ENCODE measurements at regions of chr19 and their contacts with region 1.

Region 1: DNA sequence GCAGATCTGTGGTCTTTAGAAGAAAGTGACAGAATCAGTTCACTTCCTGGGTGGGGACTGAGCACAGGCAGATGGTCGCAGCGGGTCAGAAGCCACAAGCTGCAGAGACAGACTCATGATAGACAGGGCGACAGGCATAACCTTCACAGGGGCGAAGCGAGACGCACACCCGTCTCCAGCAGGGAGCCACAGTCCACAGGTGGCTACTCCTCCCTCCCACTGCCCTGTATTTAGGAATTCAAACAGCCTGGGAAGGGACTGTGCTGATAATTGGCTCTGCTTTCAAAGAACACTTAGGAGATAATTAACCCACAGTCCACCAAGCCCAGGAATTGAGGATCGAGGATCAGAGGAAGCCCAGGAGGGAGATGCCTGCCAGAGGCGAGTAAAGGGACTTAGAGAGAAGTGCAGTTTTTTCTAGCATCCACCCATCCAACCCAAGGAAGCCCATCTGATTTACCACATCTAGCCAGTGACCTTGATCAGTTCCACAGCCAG is 23.2 kb downstream of the RFX2 start:
- DNase-seq: no peak
- H3K4me3 ChIP-seq: no peak overlapping the region
- H3K27ac ChIP-seq: peak overlapping the region; percentile 78
- H3K4me1 ChIP-seq: peaks cover 43% of the 10 kb centered on the region
- H3K27me3 ChIP-seq: no peaks in the 10 kb centered on the region
- CTCF ChIP-seq: no peak
- POLR2A ChIP-seq: no peak

Region 2: GRCh38 chr19:6066661-6067646 is 20.2 kb before region 1 on chr19:
- CTCF ChIA-PET with region 1: interaction called, 10 read pairs
- POLR2A ChIA-PET with region 1: interaction called, 4 read pairs
- dilution Hi-C with region 1: no loop called
- intact Hi-C with region 1: loop called (anchors 1 kb)
- DNase-seq: peak; percentile 99
- H3K4me3 ChIP-seq: no peak overlapping the region
- H3K27ac ChIP-seq: peak overlapping the region; percentile 100
- H3K4me1 ChIP-seq: peaks cover 54% of the 10 kb centered on the region
- H3K27me3 ChIP-seq: no peaks in the 10 kb centered on the region
- CTCF ChIP-seq: no peak
- POLR2A ChIP-seq: no peak

Region 3: DNA sequence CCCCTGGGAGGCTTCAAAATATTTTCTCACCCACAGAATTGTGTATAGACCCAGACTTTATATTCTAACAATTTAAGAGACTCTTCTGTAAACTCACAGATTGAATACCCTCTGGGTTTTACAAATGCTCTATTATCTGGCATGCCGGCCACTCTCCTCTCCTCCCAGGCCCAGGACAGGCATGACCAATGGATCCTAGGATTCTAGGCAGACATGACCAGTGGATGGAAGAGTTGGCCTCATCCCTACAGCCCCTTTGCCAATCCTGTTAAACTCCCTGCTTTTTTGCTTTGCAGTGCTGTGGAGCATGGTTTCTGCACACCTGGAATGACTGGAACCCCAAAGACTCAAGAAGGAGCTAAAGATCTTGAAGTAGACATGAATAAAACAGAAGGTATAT is 54.1 kb after region 1 on chr19:
- CTCF ChIA-PET with region 1: no interaction called
- POLR2A ChIA-PET with region 1: no interaction called
- dilution Hi-C with region 1: no loop called
- intact Hi-C with region 1: no loop called
- DNase-seq: no peak
- H3K4me3 ChIP-seq: no peak overlapping the region
- H3K27ac ChIP-seq: no peak overlapping the region
- H3K4me1 ChIP-seq: no peaks in the 10 kb centered on the region
- H3K27me3 ChIP-seq: no peaks in the 10 kb centered on the region
- CTCF ChIP-seq: no peak
- POLR2A ChIP-seq: no peak